HepG2 (cell line): ENCODE measurements at regions of chr4 and their contacts with region 1.

Region 1: DNA sequence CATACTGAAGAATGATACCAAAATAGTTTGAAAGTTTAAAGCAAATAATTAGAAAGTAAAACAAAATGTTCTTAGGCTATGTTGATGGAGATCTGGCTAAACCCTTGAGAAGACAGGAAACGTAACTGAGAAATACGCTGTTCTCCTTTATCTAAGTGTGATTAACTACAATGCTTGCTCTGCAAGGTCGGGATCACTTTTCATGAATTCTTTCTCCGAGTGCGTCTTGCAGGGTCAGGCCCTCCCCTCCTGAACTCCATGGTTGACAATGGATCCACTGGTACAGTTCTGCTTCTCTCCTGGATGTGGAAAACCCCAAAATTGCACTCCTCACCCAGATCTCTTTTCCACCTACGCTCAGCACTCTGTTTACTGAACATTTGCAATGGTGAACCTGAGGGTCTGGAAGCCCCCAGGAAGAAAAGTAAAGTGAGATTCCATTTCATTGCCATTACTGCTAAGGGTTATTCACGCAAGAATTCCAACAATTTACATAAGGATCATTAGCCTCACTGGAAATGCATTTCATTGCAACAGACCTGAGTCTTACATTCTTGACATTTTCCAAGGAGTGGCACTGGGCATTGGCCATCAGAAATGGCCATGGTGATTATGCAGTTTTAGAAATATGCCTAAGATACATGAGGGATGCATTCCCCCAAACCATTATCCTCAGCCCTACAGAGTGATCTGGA is 24.6 kb upstream of the WWC2 start:
- DNase-seq: peak; percentile 31
- ATAC-seq: no peak; the same call in 2 of the 3 replicates
- H3K4me3 ChIP-seq: no peak overlapping the region; a peak in 1 of 6 replicates
- H3K27ac ChIP-seq: no peak overlapping the region
- H3K4me1 ChIP-seq: peaks cover 63% of the 10 kb centered on the region
- H3K27me3 ChIP-seq: no peaks in the 10 kb centered on the region; a peak in 1 of 5 replicates
- CTCF ChIP-seq: no peak
- EP300 ChIP-seq: no peak
- POLR2A ChIP-seq: no peak
- RAD21 ChIP-seq: no peak

Region 2: DNA sequence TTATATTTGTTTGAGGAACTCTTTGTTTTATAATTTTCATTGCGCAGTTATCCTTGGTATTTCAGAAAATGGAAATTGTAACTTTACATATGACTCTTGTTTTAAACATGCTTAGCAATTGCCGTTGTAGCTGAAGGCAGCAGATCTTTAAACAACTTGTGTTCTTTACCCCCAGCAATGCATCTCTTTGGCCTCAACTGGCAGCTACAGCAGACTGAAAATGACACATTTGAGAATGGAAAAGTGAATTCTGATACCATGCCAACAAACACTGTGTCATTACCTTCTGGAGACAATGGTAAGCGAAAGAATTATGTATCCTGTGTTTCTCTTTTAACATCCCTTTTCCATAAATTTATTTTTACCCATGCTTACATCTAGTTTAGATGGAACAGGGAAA is 420.8 kb before region 1 on chr4:
- CTCF ChIA-PET with region 1: no interaction called
- POLR2A ChIA-PET with region 1: no interaction called
- in situ Hi-C with region 1: no loop called
- intact Hi-C with region 1: no loop called
- DNase-seq: no peak
- ATAC-seq: no peak
- H3K4me3 ChIP-seq: no peak overlapping the region
- H3K27ac ChIP-seq: no peak overlapping the region
- H3K4me1 ChIP-seq: no peaks in the 10 kb centered on the region
- H3K27me3 ChIP-seq: no peaks in the 10 kb centered on the region
- CTCF ChIP-seq: no peak
- EP300 ChIP-seq: no peak
- POLR2A ChIP-seq: no peak
- RAD21 ChIP-seq: no peak

Region 3: DNA sequence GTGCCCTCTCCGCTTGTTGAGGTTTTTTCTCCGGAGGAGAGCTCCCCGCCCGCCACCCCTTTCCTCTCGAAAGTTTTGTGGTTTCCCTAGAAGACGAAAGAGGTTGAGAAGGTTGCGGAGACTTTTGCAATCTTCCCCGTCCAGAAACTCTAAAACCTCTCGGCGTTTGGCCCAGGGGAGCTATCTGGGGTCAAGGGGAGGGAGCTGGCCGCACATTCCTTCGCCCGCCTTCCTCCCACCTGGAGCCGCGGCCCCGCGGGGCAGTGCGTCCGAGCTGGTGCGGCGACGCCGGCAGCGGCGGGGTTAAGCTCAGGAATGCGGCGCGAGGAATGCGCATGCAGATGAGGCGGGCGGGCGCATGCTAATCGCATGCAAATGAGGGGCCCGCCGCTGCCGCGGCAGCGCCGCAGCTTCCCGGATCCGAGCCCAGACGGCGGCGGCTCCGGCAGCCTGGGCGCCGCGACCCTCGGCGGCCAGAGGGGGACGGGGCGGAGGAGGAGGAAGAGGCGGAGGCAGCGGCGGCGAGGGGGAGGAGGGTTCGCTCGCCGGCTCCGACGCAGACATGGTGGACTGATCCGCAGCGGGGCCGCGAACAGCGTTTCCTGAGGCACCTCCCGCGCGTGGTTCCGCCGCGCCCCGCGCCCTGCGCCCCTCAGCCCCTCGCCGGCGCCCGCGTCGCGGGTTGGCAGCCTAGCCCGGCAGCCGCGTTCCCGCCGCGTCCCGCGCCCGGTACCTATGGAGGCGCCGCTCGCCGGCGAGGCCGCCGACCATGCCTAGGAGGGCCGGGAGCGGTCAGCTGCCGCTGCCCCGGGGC is 24.5 kb after region 1 on chr4 and contains the start of gene WWC2:
- CTCF ChIA-PET with region 1: interaction called, 3 read pairs
- POLR2A ChIA-PET with region 1: interaction called, 78 read pairs
- in situ Hi-C with region 1: no loop called
- intact Hi-C with region 1: no loop called
- DNase-seq: peak; percentile 83
- ATAC-seq: peak; percentile 82
- H3K4me3 ChIP-seq: peak within 1 kb of the TSS; percentile 90 to 97 (median 91)
- H3K27ac ChIP-seq: peak within 1 kb of the TSS; percentile 99
- H3K4me1 ChIP-seq: peaks cover 68% of the 10 kb centered on the region
- H3K27me3 ChIP-seq: no peaks in the 10 kb centered on the region; a peak in 1 of 5 replicates
- CTCF ChIP-seq: no peak; the same call in 1 of the 2 replicates
- EP300 ChIP-seq: peak; percentile 45 to 52; a peak in 1 of 4 replicates
- POLR2A ChIP-seq: peak in 1 of 2 experiments; percentile 56; a peak in 2 of 4 replicates
- RAD21 ChIP-seq: peak; percentile 62
- total RNA-seq, gene WWC2: 40.0 and 44.6 TPM in 2 replicates

Region 4: DNA sequence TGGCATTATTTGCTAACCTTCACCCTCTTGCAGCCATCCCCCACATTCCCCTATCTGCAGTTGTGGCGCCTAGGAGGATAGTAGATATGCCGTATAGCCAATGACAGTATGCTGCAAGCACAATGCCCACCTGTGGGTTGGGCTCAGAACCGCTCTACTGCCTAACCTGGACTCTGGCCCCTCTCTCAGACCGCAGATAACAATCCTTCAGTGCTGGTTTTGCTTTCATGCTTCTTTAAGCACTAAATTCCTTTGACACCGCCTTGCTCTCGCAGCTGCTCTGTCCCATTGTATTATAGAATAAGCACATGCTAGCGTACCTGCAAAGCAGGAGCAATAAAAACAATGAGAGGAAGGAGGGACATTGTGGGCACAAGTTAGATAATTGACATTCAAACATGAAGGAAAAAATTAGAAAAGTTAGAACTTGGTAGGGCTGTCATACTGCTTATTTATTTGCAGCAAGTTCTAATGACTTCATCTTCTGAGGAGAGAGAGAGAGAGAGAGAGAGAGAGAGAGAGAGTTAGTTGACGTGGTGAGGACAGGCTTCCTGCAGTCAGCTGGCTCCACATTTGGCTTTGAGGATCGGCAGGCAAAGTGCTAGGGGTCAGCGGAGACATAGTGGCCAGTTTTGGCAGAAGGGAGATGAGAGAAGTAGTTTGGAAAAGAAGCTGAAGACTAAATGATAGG is 80.4 kb after region 1 on chr4:
- CTCF ChIA-PET with region 1: no interaction called
- POLR2A ChIA-PET with region 1: no interaction called
- in situ Hi-C with region 1: no loop called
- intact Hi-C with region 1: loop called (anchors 1 kb)
- DNase-seq: peak; percentile 96
- ATAC-seq: peak; percentile 99
- H3K4me3 ChIP-seq: peak overlapping the region; percentile 13 to 17 (median 15); a peak in 3 of 6 replicates
- H3K27ac ChIP-seq: peak overlapping the region; percentile 64
- H3K4me1 ChIP-seq: peaks cover 70% of the 10 kb centered on the region
- H3K27me3 ChIP-seq: no peaks in the 10 kb centered on the region
- CTCF ChIP-seq: no peak
- EP300 ChIP-seq: peak; percentile 30 to 52; a peak in 2 of 4 replicates
- POLR2A ChIP-seq: no peak
- RAD21 ChIP-seq: no peak; the same call in 1 of the 2 replicates

Region 5: DNA sequence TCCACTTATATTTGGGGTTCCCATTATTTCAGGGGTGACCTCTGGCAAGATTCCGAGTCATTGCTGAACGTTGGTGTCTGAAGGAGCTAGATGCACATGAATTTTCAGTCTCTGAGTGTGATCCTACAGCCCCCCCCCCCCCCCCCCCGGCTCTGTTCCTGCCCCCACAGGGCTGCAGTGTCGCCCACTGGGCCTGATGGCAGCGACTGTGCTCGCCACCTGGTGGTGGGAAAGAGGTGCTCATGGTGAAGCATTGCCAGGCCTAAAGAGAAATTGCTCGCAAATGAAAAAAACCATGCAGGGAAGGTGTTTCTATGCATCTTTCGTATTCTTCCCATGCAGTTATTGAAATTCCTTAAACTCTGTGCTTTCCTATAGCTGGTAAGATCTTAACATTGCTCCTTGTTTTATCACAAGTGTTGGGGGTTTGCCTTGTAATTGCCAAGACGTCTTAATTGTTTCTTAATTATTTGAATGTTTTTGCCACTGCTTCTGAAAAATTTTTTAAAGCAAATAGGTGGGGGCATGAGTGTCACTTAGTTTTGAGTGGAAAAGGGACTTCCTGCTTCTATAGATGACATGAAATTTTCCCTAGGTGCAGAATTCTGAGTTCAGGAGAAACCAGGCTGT is 182.4 kb after region 1 on chr4:
- CTCF ChIA-PET with region 1: interaction called, 69 read pairs
- POLR2A ChIA-PET with region 1: interaction called, 4 read pairs
- in situ Hi-C with region 1: loop called (anchors 5 kb)
- intact Hi-C with region 1: loop called (anchors 1 kb)
- DNase-seq: peak; percentile 40
- ATAC-seq: peak; percentile 82
- H3K4me3 ChIP-seq: no peak overlapping the region
- H3K27ac ChIP-seq: no peak overlapping the region
- H3K4me1 ChIP-seq: peaks cover 20% of the 10 kb centered on the region
- H3K27me3 ChIP-seq: no peaks in the 10 kb centered on the region
- CTCF ChIP-seq: peak; percentile 74
- EP300 ChIP-seq: no peak
- POLR2A ChIP-seq: no peak
- RAD21 ChIP-seq: peak; percentile 49; the same call in 1 of the 2 replicates

Region 6: GRCh38 chr4:183407128-183407585 is 332.7 kb after region 1 on chr4:
- CTCF ChIA-PET with region 1: no interaction called
- POLR2A ChIA-PET with region 1: no interaction called
- in situ Hi-C with region 1: loop called (anchors 25 kb)
- intact Hi-C with region 1: loop called (anchors 10 kb)
- DNase-seq: peak; percentile 60
- ATAC-seq: peak; percentile 87
- H3K4me3 ChIP-seq: peak overlapping the region; percentile 34 to 63 (median 57); a peak in 5 of 6 replicates
- H3K27ac ChIP-seq: no peak overlapping the region
- H3K4me1 ChIP-seq: peaks cover 42% of the 10 kb centered on the region
- H3K27me3 ChIP-seq: peaks cover 1 to 10% of the 10 kb centered on the region in 2 experiments; a peak in 2 of 5 replicates
- CTCF ChIP-seq: peak; percentile 96
- EP300 ChIP-seq: no peak
- POLR2A ChIP-seq: no peak
- RAD21 ChIP-seq: peak; percentile 90